Ascending aorta (tissue), 2 donors: ENCODE measurements at regions of chr14 and their contacts with region 1.

Region 1: GRCh38 chr14:105473677-105474482 is 741 bp upstream of the CRIP2 start:
- DNase-seq: peak; percentile 87 to 98
- H3K4me3 ChIP-seq: peak overlapping the region; percentile 65 to 78
- H3K27ac ChIP-seq: peak overlapping the region; percentile 86 to 96
- H3K4me1 ChIP-seq: peaks cover 21 to 45% of the 10 kb centered on the region in 2 donors
- H3K27me3 ChIP-seq: no peaks in the 10 kb centered on the region
- CTCF ChIP-seq: no peak

Region 2: GRCh38 chr14:105248368-105248756 is 225.5 kb before region 1 on chr14 and contains the start of gene BTBD6:
- intact Hi-C with region 1: loop called (anchors 10 kb)
- DNase-seq: peak; percentile 37 to 91
- H3K4me3 ChIP-seq: peak within 1 kb of the TSS; percentile 72
- H3K27ac ChIP-seq: peak within 1 kb of the TSS; percentile 84 to 88
- H3K4me1 ChIP-seq: peaks cover 4 to 17% of the 10 kb centered on the region in 2 donors
- H3K27me3 ChIP-seq: no peaks in the 10 kb centered on the region
- CTCF ChIP-seq: no peak
- total RNA-seq, gene BTBD6: 80.1 TPM

Region 3: DNA sequence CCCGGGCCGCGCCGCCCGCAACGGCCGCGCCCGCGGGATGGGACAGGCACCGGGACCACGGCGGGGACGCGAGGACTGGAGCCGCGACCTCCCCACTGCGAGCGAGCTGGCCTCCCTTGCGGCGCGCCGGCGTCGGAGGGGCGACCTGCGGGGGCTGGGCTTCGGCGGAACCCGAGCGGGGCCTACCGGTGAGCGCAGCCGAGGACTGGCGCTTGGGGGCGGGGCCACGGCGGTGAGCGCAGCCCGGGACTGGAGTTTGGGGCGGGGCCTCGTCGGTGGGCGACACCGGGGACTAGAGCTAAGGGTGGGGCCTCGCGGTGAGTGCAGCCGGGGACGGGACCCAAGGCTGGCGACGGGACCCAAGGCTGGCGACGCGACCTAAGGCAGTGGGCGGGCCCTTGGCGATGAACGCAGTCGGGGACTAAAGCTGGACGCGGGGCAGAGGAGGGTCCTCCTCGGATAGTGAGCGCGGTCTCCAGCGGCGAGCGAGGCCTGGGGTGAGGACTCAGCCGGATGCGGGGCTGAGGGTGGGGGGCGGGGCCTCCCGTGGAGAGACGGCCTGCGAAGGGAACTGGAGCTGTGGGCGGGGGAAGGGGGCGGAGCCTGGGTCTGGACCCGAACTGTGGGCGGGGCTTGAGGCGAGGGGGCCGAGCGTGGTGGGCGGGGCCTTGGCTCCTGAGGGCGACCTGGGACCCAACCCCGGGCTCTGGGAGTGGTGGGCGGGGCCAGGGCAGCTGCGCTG is 172.9 kb before region 1 on chr14 and contains the start of gene BRF1:
- intact Hi-C with region 1: loop called (anchors 5 kb)
- DNase-seq: peak; percentile 88 to 98
- H3K4me3 ChIP-seq: peak within 1 kb of the TSS; percentile 62 to 84
- H3K27ac ChIP-seq: peak within 1 kb of the TSS; percentile 93 to 96
- H3K4me1 ChIP-seq: peaks cover 8 to 14% of the 10 kb centered on the region in 2 donors
- H3K27me3 ChIP-seq: no peaks in the 10 kb centered on the region
- CTCF ChIP-seq: no peak
- total RNA-seq, gene BRF1: 60.9 TPM

Region 4: DNA sequence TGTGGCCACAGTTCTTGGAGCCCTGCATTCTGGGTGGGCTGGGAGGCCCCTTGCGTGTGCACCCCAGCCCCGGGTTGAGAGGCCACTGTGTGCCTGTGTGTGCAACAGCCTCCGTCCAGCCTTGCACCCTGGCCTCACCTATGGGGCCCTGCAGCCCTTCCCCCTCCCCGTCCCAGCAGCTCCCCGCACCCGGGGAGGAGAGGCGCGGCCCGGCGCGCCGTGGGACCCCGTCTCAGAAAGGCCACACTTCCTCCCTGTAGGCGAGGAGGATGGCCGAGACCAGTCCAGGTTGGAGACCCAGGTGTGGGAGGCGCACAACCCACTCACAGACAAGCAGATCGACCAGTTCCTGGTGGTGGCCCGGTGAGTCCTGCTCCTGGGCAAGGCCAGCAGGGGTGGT is 15.9 kb before region 1 on chr14:
- intact Hi-C with region 1: no loop called
- DNase-seq: no peak
- H3K4me3 ChIP-seq: no peak overlapping the region
- H3K27ac ChIP-seq: no peak overlapping the region
- H3K4me1 ChIP-seq: no peaks in the 10 kb centered on the region
- H3K27me3 ChIP-seq: no peaks in the 10 kb centered on the region
- CTCF ChIP-seq: no peak